GM12878 (cell line): ENCODE measurements at regions of chr3 and their contacts with region 1.

Region 1: DNA sequence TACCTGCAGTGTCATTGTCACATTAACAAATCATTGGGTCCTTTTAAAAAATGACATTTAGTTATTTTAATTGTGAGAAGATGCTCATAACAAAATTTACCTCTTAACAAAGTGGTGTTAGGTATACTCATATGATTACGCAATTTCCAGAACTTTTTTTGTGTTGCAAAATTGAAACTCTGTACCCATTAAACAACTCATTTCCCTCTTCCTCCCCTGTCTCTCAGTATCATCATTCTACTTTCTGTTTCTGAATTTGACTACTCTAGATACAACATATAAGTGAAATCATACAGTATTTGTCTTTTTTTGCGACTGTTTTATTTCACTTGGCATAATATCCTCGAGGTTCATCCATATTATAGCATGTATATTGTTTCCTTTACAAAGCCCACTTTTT is 58.7 kb upstream of the CHST2 start:
- DNase-seq: peak; percentile 57
- ATAC-seq: peak; percentile 97
- H3K4me3 ChIP-seq: no peak overlapping the region
- H3K27ac ChIP-seq: peak overlapping the region; percentile 77
- H3K4me1 ChIP-seq: peaks cover 10% of the 10 kb centered on the region
- H3K27me3 ChIP-seq: no peaks in the 10 kb centered on the region
- CTCF ChIP-seq: no peak
- EP300 ChIP-seq: peak in 1 of 2 experiments; percentile 72; a peak in 1 of 4 replicates
- POLR2A ChIP-seq: no peak
- RAD21 ChIP-seq: no peak

Region 2: GRCh38 chr3:143040261-143040879 is 20.5 kb before region 1 on chr3:
- CTCF ChIA-PET with region 1: interaction called, 7 read pairs
- POLR2A ChIA-PET with region 1: interaction called, 7 read pairs
- RAD21 ChIA-PET with region 1: no interaction called
- SMC1A ChIA-PET with region 1: interaction called, 16 read pairs
- in situ Hi-C with region 1: no loop called
- intact Hi-C with region 1: no loop called
- DNase-seq: no peak
- ATAC-seq: peak; percentile 48; the same call in 1 of the 3 replicates
- H3K4me3 ChIP-seq: no peak overlapping the region
- H3K27ac ChIP-seq: no peak overlapping the region
- H3K4me1 ChIP-seq: no peaks in the 10 kb centered on the region
- H3K27me3 ChIP-seq: no peaks in the 10 kb centered on the region
- CTCF ChIP-seq: peak; percentile 33 to 47 (median 40); a peak in 5 of 6 replicates
- EP300 ChIP-seq: no peak
- POLR2A ChIP-seq: no peak
- RAD21 ChIP-seq: peak; percentile 34; the same call in 1 of the 2 replicates